ENCODE measurements at regions of chr19 and their contacts with region 1.

Region 1: DNA sequence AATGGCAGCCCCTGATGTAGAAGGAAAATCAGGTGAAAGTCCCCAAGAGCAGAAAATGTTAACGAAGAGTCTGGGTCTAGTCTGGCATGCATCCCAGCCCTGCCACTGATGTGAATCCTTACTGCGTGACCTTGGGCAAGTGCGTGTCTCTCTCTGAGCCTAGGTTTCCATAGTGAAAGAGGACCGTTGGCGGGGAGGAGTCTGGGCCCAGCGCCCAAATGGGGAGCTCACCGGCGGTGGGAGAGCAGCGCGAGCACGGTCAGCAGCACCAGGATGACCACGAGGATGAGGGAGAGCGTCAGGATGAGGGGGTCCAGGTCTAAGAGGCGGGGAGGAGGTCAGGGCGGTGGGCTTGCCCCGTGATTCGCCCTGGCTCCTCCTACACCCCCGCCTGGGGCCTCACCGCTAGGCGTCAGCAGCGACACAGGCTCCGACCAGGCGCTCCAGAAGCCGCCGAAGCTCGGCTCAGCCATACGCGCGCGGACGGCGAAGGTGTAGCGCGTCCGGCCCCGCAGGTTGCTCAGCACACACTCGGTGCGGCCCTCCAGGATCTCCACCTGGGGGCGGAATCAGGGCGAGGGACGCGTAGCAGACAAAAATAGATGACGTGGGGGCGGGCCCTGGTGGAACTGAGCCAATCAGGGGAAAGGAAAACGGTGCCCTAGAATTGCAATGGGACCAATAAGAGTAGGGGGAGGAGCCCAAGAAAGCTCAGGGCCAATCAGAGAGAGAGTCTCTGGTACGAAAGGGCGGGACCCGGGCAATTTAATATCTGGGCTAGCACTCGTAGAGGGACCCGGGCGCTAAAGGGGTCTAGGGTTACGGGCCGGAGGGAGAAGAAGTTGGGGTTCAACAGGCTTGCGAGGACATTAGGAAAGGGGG is 3.2 kb downstream of the EPOR start:
- DNase-seq: peak; percentile 96
- H3K4me3 ChIP-seq: peak overlapping the region; percentile 39 to 41
- H3K27ac ChIP-seq: peak overlapping the region; percentile 87 to 91
- H3K4me1 ChIP-seq: peaks cover 20% of the 10 kb centered on the region
- H3K27me3 ChIP-seq: no peaks in the 10 kb centered on the region
- CTCF ChIP-seq: peak; percentile 76 to 93 (median 86)
- POLR2A ChIP-seq: peak; percentile 87

Region 2: DNA sequence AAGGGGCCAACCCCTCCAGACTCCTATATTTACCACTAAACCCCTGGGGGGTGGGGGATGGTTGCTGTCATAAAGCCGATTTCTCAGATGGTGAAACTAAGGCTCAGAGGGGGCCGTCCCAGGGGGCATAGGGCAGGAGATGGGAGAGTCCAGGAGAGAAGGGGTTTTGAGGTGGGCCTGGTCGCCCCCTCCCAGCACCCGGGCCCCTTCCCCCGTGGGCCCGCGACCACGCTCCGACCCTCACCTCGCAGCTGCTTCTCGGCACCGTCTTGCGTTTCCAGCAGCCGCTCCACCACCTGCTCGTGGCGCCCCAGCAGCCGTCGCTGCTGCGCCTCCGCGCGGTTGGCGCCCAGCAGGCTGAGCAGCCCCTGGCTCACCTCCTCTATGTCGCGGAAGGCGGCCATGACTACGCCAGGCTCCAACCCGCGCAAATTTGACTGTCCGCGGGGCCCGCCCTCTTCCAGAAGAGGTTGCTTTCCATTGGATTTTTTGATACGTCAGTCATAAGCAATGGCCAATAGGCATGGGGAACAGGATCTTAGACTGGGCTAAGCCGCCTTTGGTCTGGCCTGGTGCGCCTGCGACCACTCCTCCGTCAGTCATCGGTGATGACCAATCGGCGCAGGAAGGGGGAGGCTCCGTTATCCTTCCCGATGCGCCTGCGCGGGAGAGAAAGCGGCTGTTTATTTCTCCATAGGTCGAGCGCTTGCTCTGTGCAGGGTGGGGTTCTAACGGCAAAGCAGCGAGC is 225.3 kb before region 1 on chr19 and contains the start of gene SPC24:
- intact Hi-C with region 1: no loop called
- DNase-seq: peak; percentile 94
- H3K4me3 ChIP-seq: peak within 1 kb of the TSS; percentile 28 to 52
- H3K27ac ChIP-seq: peak within 1 kb of the TSS; percentile 4 to 47
- H3K4me1 ChIP-seq: peaks cover 9% of the 10 kb centered on the region
- H3K27me3 ChIP-seq: no peaks in the 10 kb centered on the region
- CTCF ChIP-seq: no peak
- POLR2A ChIP-seq: no peak
- total RNA-seq, gene SPC24: 0.73 to 5.0 TPM

Region 3: DNA sequence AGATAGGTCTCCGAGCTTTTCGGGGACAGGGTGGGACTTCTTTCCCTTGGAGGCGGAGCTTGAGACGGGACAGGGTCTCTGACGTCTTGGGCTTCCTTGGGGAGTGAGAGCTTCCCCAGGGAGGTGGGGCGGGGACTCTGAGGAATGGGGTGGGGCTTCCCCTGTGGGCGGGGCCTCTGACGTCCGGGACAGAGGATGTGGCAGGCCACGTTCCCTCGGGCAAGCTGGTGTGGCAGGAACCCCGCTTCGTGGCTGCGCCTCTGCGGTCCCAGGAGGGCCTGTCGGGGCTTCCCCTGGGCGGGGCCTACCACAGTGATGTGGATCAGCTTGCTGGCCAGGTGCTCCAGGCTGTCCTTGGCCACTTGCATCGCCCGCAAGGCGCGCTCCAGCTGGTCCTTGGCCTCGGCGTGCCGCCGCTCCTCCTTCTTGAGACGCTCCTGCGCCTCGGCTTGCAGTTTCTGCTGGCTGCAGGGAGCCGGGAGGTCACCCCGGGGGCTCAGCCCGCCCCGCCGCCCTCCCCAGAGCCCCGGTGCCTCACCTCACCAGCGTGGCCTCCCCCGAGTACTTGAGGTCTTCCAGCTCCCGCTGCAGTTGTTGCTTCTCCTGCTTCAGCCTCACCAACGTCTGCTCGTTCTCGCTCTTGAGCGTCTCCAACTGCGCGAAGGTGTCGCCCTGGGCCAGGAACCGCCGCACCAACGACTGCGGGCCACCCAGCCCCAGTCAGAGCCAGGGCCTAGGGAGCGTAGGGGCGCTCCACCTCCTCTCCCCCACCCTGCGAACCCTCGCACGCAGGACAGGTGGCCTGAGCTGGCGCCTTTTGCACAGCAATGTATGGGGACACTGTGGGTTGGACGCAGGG is 41.5 kb after region 1 on chr19:
- intact Hi-C with region 1: no loop called
- DNase-seq: peak; percentile 68
- H3K4me3 ChIP-seq: no peak overlapping the region
- H3K27ac ChIP-seq: peak overlapping the region in 1 of 2 donors; percentile 49
- H3K4me1 ChIP-seq: no peaks in the 10 kb centered on the region
- H3K27me3 ChIP-seq: no peaks in the 10 kb centered on the region
- CTCF ChIP-seq: no peak
- POLR2A ChIP-seq: no peak

Region 4: DNA sequence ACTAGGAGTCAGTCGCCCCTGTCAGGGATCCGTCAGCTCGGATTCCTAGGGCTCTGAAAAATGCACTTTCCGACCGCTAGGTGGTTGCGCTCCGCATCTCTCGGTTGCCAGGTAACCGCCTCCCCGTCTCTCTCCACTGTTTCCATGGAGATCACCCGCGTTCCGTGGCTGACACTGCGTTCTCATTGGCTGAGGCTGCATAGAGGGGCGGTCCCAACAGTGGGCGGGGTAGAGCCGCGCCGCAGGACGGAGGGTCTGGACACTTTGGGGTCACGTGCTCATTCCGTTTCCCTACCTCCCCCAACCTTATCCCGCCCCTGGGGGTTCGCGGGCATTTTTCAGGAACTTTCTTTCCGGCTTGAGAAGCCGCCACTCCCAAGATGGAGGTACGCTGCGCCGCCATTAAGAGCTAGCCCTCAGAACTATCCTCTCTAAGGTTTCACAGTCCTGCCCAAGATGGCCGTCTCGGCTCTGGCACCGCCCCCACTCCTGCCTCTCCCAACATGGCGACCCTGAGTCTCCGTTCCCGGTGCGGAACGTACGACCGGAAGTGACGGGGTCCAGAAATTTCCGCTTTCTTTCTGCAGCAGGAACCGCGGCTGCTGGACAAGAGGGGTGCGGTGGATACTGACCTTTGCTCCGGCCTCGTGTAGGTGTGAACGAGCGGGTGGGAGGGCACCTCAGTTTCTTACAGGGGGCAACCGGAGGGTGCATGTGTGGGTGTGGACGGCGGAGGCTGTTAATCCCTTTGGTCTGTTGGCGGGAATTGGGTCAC is 54.4 kb after region 1 on chr19 and contains the starts of genes ODAD3 and PRKCSH:
- intact Hi-C with region 1: loop called (anchors 2 kb)
- DNase-seq: peak; percentile 99
- H3K4me3 ChIP-seq: peak within 1 kb of the TSS; percentile 65 to 71
- H3K27ac ChIP-seq: peak within 1 kb of the TSS; percentile 74 to 81
- H3K4me1 ChIP-seq: peaks cover 12% of the 10 kb centered on the region
- H3K27me3 ChIP-seq: no peaks in the 10 kb centered on the region
- CTCF ChIP-seq: peak; percentile 82 to 99 (median 96)
- POLR2A ChIP-seq: peak; percentile 53
- total RNA-seq, gene ODAD3: 1.3 to 2.7 TPM
- total RNA-seq, gene PRKCSH: 229 to 238 TPM

Region 5: GRCh38 chr19:11587302-11587974 is 206.5 kb after region 1 on chr19:
- intact Hi-C with region 1: loop called (anchors 10 kb)
- DNase-seq: peak; percentile 59
- H3K4me3 ChIP-seq: no peak overlapping the region
- H3K27ac ChIP-seq: no peak overlapping the region
- H3K4me1 ChIP-seq: no peaks in the 10 kb centered on the region
- H3K27me3 ChIP-seq: no peaks in the 10 kb centered on the region
- CTCF ChIP-seq: peak; percentile 53 to 95 (median 84)
- POLR2A ChIP-seq: no peak